K562 (cell line): ENCODE measurements at regions of chr6 and their contacts with region 1.

Region 1: DNA sequence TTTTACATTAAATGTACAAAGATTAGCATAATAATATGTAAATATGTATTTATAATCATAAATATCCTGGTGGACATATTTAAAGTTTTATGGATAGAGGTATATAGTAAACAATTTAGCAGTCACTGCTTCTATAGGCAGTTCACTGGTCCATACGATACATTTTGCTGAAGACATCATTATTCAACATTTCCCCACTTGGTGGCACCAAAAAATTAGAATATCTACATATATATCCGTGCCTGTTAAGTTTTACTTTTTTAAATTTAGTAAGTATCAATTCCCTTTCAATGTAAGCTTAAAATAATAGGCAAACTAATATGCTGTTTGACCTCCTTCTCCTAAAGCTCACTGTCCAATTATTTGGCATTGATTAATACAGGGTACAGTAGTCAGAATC is 64.2 kb downstream of the LMBRD1 start:
- DNase-seq: peak; percentile 12 to 19 (median 18)
- ATAC-seq: peak; percentile 83
- H3K4me3 ChIP-seq: no peak overlapping the region
- H3K27ac ChIP-seq: no peak overlapping the region
- H3K4me1 ChIP-seq: no peaks in the 10 kb centered on the region
- H3K27me3 ChIP-seq: no peaks in the 10 kb centered on the region
- CTCF ChIP-seq: peak in 2 of 3 experiments; percentile 13 to 49; a peak in 3 of 6 replicates
- EP300 ChIP-seq: no peak
- POLR2A ChIP-seq: no peak
- RAD21 ChIP-seq: peak; percentile 57 to 67

Region 2: DNA sequence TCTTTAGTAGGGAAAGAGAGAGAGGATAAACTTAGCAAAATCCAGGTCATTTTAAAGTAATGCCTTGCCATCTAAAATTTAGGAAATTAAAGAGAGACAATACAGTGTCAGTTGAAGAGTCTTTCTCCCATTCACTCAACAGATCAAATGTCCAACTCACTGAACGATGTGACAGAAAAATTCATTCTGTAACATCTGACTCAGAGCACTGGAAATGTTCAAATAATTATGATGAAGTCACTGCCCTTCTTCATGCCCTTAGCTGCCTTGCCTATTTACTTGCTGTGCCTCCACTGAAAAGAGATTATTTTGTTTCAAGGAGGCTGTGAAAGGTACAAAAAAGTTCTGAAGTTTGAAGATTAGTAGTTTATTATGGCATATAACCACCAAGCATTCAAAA is 662.8 kb before region 1 on chr6:
- CTCF ChIA-PET with region 1: no interaction called
- POLR2A ChIA-PET with region 1: no interaction called
- in situ Hi-C with region 1: no loop called
- intact Hi-C with region 1: no loop called
- DNase-seq: no peak
- ATAC-seq: no peak
- H3K4me3 ChIP-seq: no peak overlapping the region
- H3K27ac ChIP-seq: no peak overlapping the region
- H3K4me1 ChIP-seq: peaks cover 3% of the 10 kb centered on the region in 2 experiments; a peak in 1 of 5 replicates
- H3K27me3 ChIP-seq: no peaks in the 10 kb centered on the region
- CTCF ChIP-seq: no peak
- EP300 ChIP-seq: no peak
- POLR2A ChIP-seq: no peak
- RAD21 ChIP-seq: no peak

Region 3: GRCh38 chr6:69796642-69797390 is 64.2 kb after region 1 on chr6 and contains the start of gene LMBRD1:
- CTCF ChIA-PET with region 1: no interaction called
- POLR2A ChIA-PET with region 1: no interaction called
- in situ Hi-C with region 1: no loop called
- intact Hi-C with region 1: loop called (anchors 5 kb)
- DNase-seq: peak; percentile 95 to 97 (median 96)
- ATAC-seq: peak; percentile 97
- H3K4me3 ChIP-seq: peak within 1 kb of the TSS; percentile 84
- H3K27ac ChIP-seq: peak within 1 kb of the TSS; percentile 88
- H3K4me1 ChIP-seq: peaks cover 7 to 12% of the 10 kb centered on the region in 2 experiments; a peak in 4 of 5 replicates
- H3K27me3 ChIP-seq: no peaks in the 10 kb centered on the region
- CTCF ChIP-seq: peak; percentile 80 to 97 (median 86)
- EP300 ChIP-seq: no peak
- POLR2A ChIP-seq: peak; percentile 79
- RAD21 ChIP-seq: 0 out of 4 replicates have a peak, but pooled peaks of 1 of the 2 experiments have one; percentile 4
- polyA plus RNA-seq, gene LMBRD1: 64.3 to 85.2 TPM

Region 4: GRCh38 chr6:69866770-69867638 is 134.4 kb after region 1 on chr6:
- CTCF ChIA-PET with region 1: no interaction called
- POLR2A ChIA-PET with region 1: no interaction called
- in situ Hi-C with region 1: no loop called
- intact Hi-C with region 1: loop called (anchors 5 kb)
- DNase-seq: peak; percentile 7 to 59 (median 22)
- ATAC-seq: peak; percentile 96
- H3K4me3 ChIP-seq: peak overlapping the region; percentile 32
- H3K27ac ChIP-seq: no peak overlapping the region
- H3K4me1 ChIP-seq: peaks cover 4 to 13% of the 10 kb centered on the region in 2 experiments; a peak in 2 of 5 replicates
- H3K27me3 ChIP-seq: peaks cover 18 to 24% of the 10 kb centered on the region in 2 experiments
- CTCF ChIP-seq: peak in 1 of 3 experiments; percentile 50; a peak in 1 of 6 replicates
- EP300 ChIP-seq: no peak
- POLR2A ChIP-seq: no peak
- RAD21 ChIP-seq: no peak; a peak in 1 of 4 replicates

Region 5: GRCh38 chr6:70107852-70108629 is 375.4 kb after region 1 on chr6:
- CTCF ChIA-PET with region 1: no interaction called
- POLR2A ChIA-PET with region 1: no interaction called
- in situ Hi-C with region 1: no loop called
- intact Hi-C with region 1: loop called (anchors 10 kb)
- DNase-seq: peak; percentile 34 to 55 (median 36)
- ATAC-seq: peak; percentile 61; the same call in 2 of the 3 replicates
- H3K4me3 ChIP-seq: no peak overlapping the region
- H3K27ac ChIP-seq: no peak overlapping the region
- H3K4me1 ChIP-seq: no peaks in the 10 kb centered on the region
- H3K27me3 ChIP-seq: no peaks in the 10 kb centered on the region; a peak in 1 of 5 replicates
- CTCF ChIP-seq: peak; percentile 30 to 75 (median 53); a peak in 4 of 6 replicates
- EP300 ChIP-seq: no peak
- POLR2A ChIP-seq: no peak
- RAD21 ChIP-seq: peak; percentile 83 to 84

Region 6: GRCh38 chr6:70166088-70166958 is 433.7 kb after region 1 on chr6:
- CTCF ChIA-PET with region 1: interaction called, 3 read pairs
- POLR2A ChIA-PET with region 1: no interaction called
- in situ Hi-C with region 1: no loop called
- intact Hi-C with region 1: loop called (anchors 2 kb)
- DNase-seq: peak; percentile 59 to 78 (median 69)
- ATAC-seq: peak; percentile 84
- H3K4me3 ChIP-seq: no peak overlapping the region
- H3K27ac ChIP-seq: no peak overlapping the region
- H3K4me1 ChIP-seq: peaks cover 5 to 27% of the 10 kb centered on the region in 2 experiments
- H3K27me3 ChIP-seq: no peaks in the 10 kb centered on the region; a peak in 2 of 5 replicates
- CTCF ChIP-seq: peak; percentile 78 to 92 (median 86)
- EP300 ChIP-seq: no peak
- POLR2A ChIP-seq: no peak
- RAD21 ChIP-seq: peak; percentile 77 to 87

Region 7: GRCh38 chr6:70706491-70707123 is 974.0 kb after region 1 on chr6:
- CTCF ChIA-PET with region 1: no interaction called
- POLR2A ChIA-PET with region 1: no interaction called
- in situ Hi-C with region 1: no loop called
- intact Hi-C with region 1: no loop called
- DNase-seq: peak in 3 of 4 experiments; percentile 10 to 49 (median 13)
- ATAC-seq: no peak
- H3K4me3 ChIP-seq: no peak overlapping the region
- H3K27ac ChIP-seq: no peak overlapping the region
- H3K4me1 ChIP-seq: no peaks in the 10 kb centered on the region
- H3K27me3 ChIP-seq: no peaks in the 10 kb centered on the region
- CTCF ChIP-seq: peak in 2 of 3 experiments; percentile 42 to 74; a peak in 3 of 6 replicates
- EP300 ChIP-seq: no peak
- POLR2A ChIP-seq: no peak
- RAD21 ChIP-seq: peak; percentile 64 to 78